ENCODE measurements at regions of chr1 and their contacts with region 1.

Region 1: GRCh38 chr1:188857526-188858087 is 1620.1 kb downstream of the BRINP3 start:
- H3K4me3 Mint-ChIP-seq: no peak overlapping the region
- H3K27ac Mint-ChIP-seq: no peak overlapping the region
- H3K4me1 Mint-ChIP-seq: no peaks in the 10 kb centered on the region
- H3K27me3 Mint-ChIP-seq: no peaks in the 10 kb centered on the region

Region 2: GRCh38 chr1:188906921-188907641 is 49.5 kb after region 1 on chr1:
- intact Hi-C with region 1: loop called (anchors 5 kb)
- H3K4me3 Mint-ChIP-seq: no peak overlapping the region
- H3K27ac Mint-ChIP-seq: no peak overlapping the region
- H3K4me1 Mint-ChIP-seq: no peaks in the 10 kb centered on the region
- H3K27me3 Mint-ChIP-seq: no peaks in the 10 kb centered on the region

Region 3: GRCh38 chr1:188949701-188950100 is 92.1 kb after region 1 on chr1:
- intact Hi-C with region 1: no loop called
- H3K4me3 Mint-ChIP-seq: no peak overlapping the region
- H3K27ac Mint-ChIP-seq: no peak overlapping the region
- H3K4me1 Mint-ChIP-seq: no peaks in the 10 kb centered on the region
- H3K27me3 Mint-ChIP-seq: no peaks in the 10 kb centered on the region

Measured in dendritic cell treated with granulocyte-macrophage colony-stimulating factor and Interleukin-4, amounts not matched to agents 40 ng/mL and 50 ng/mL, for 4 days (primary cell).